HepG2 (cell line): ENCODE measurements at regions of chr10 and their contacts with region 1.

Region 1: GRCh38 chr10:58513188-58514110 is 777 bp downstream of the BICC1 start:
- DNase-seq: no peak
- ATAC-seq: peak; percentile 67
- H3K4me3 ChIP-seq: peak overlapping the region; percentile 71 to 84 (median 80)
- H3K27ac ChIP-seq: peak overlapping the region; percentile 22
- H3K4me1 ChIP-seq: peaks cover 39% of the 10 kb centered on the region
- H3K27me3 ChIP-seq: no peaks in the 10 kb centered on the region; a peak in 1 of 5 replicates
- CTCF ChIP-seq: no peak
- EP300 ChIP-seq: no peak
- POLR2A ChIP-seq: no peak
- RAD21 ChIP-seq: no peak

Region 2: GRCh38 chr10:58299580-58299979 is 213.9 kb before region 1 on chr10:
- CTCF ChIA-PET with region 1: no interaction called
- POLR2A ChIA-PET with region 1: no interaction called
- in situ Hi-C with region 1: loop called (anchors 10 kb)
- intact Hi-C with region 1: loop called (anchors 5 kb)
- DNase-seq: peak; percentile 71
- ATAC-seq: peak; percentile 99
- H3K4me3 ChIP-seq: peak overlapping the region in 2 of 3 experiments; percentile 13 to 29; a peak in 2 of 6 replicates
- H3K27ac ChIP-seq: no peak overlapping the region
- H3K4me1 ChIP-seq: peaks cover 31% of the 10 kb centered on the region
- H3K27me3 ChIP-seq: no peaks in the 10 kb centered on the region
- CTCF ChIP-seq: peak; percentile 87
- EP300 ChIP-seq: no peak
- POLR2A ChIP-seq: no peak
- RAD21 ChIP-seq: peak; percentile 70

Region 3: DNA sequence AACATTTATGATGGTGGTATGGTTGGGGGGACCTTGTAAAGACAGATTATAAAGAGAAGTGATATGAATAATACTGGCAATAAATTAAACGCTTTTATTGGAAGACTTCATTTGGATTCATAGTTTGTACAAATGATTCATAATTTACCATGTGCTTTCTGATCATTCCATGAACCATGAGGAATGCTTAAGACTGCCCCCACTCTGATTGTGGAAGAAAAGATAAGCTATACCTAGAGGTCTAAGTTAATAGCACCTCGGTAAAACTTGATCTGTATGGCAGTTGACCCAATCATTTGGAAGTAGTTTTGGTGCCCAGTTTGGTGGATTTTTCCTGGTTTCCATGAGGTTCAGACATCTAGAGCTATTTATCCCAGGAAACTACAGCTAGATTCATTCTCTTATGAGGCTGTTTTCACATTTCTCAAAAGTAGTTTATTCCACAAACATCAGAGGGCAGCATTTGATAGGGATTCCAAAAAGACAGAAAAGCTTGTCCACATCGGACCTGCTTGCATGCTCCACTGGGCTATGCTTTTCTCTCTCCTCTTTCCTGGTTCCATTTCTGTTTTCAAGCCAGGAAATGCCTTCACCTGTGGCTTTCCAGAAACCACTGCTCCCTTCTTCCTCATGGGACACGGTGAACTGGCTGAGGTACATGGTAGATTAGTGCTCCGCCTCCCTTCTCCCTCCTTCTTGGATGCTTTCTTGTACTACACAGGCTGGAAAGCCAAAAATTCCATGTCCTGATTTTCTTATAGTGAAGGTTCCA is 99.0 kb before region 1 on chr10:
- CTCF ChIA-PET with region 1: interaction called, 3 read pairs
- POLR2A ChIA-PET with region 1: no interaction called
- in situ Hi-C with region 1: loop called (anchors 10 kb)
- intact Hi-C with region 1: loop called (anchors 5 kb)
- DNase-seq: peak; percentile 68
- ATAC-seq: peak; percentile 72
- H3K4me3 ChIP-seq: no peak overlapping the region
- H3K27ac ChIP-seq: no peak overlapping the region
- H3K4me1 ChIP-seq: peaks cover 9% of the 10 kb centered on the region
- H3K27me3 ChIP-seq: no peaks in the 10 kb centered on the region
- CTCF ChIP-seq: peak; percentile 65
- EP300 ChIP-seq: no peak
- POLR2A ChIP-seq: no peak
- RAD21 ChIP-seq: 0 out of 2 replicates have a peak, but pooled peaks have one; percentile 23

Region 4: DNA sequence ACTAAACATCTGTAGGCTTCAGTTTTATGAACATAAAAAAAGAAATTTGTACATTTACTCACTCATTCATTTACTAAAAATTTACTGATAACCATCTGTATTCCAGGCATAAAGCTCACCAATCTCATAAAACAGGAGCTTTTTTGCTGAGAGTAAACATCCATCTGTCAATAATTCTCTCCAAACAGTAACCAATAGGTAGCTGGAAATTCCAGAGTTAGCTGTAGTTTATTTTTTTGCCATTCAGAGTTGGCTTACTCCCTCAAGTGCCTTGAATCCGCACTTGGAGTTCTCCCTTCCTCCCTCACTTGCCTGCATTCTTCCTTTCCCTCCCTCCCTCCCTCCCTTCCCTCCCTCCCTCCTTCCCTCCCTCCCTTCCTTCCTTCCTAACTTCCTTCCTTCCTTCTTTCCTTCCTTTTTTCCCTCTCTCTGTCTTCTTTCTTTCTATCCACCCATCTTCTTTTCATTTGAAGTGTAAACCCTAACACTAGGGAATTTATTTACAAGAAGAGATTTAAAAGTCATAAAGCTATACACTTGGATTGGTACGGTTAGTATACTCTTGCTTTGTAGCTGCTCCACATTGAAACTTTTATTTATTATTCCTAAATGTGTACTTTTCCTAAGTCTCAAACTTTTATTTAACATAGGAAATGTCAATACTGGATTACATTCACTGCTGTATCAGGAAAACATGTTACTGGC is 45.4 kb before region 1 on chr10:
- CTCF ChIA-PET with region 1: no interaction called
- POLR2A ChIA-PET with region 1: interaction called, 4 read pairs
- in situ Hi-C with region 1: no loop called
- intact Hi-C with region 1: loop called (anchors 1 kb)
- DNase-seq: peak; percentile 37
- ATAC-seq: peak; percentile 44
- H3K4me3 ChIP-seq: no peak overlapping the region; a peak in 1 of 6 replicates
- H3K27ac ChIP-seq: peak overlapping the region; percentile 68
- H3K4me1 ChIP-seq: peaks cover 48% of the 10 kb centered on the region
- H3K27me3 ChIP-seq: no peaks in the 10 kb centered on the region
- CTCF ChIP-seq: no peak
- EP300 ChIP-seq: no peak
- POLR2A ChIP-seq: no peak
- RAD21 ChIP-seq: no peak